Caco-2 (cell line): ENCODE measurements at regions of chr2 and their contacts with region 1.

Region 1: DNA sequence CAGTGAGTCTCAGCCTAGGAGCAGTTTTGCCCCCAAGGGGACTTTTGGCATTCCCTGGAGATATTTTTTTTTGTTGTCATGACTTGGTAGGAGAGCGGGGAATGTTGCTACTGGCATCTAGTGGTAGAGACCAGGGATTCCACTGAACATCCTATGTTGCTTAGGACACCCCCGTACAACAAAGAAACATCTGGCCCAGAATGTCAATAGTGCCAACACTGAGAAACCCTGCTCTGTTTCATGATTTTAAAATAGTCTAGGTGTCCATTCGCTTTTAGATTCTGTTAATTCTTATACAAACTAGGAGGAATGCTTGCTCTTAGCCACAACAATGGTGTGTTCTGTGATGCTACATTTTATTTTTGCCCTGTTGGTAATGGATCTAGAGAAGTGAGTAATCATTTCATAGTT is 225.8 kb upstream of the SIX3 start:
- DNase-seq: peak; percentile 44 to 55
- H3K4me3 ChIP-seq: no peak overlapping the region
- H3K4me3 Mint-ChIP-seq: no peak overlapping the region
- H3K27ac Mint-ChIP-seq: no peak overlapping the region
- H3K4me1 ChIP-seq: no peaks in the 10 kb centered on the region
- H3K4me1 Mint-ChIP-seq: no peaks in the 10 kb centered on the region
- H3K27me3 ChIP-seq: no peaks in the 10 kb centered on the region
- H3K27me3 Mint-ChIP-seq: no peaks in the 10 kb centered on the region
- CTCF ChIP-seq: peak; percentile 51 to 58

Region 2: GRCh38 chr2:44392338-44392943 is 323.2 kb before region 1 on chr2:
- CTCF ChIA-PET with region 1: no interaction called
- POLR2A ChIA-PET with region 1: no interaction called
- intact Hi-C with region 1: loop called (anchors 5 kb)
- DNase-seq: peak; percentile 55 to 62
- H3K4me3 ChIP-seq: no peak overlapping the region
- H3K4me3 Mint-ChIP-seq: no peak overlapping the region
- H3K27ac Mint-ChIP-seq: no peak overlapping the region
- H3K4me1 ChIP-seq: no peaks in the 10 kb centered on the region
- H3K4me1 Mint-ChIP-seq: peaks cover 7% of the 10 kb centered on the region
- H3K27me3 ChIP-seq: no peaks in the 10 kb centered on the region
- H3K27me3 Mint-ChIP-seq: no peaks in the 10 kb centered on the region
- CTCF ChIP-seq: peak; percentile 59 to 79

Region 3: GRCh38 chr2:44560352-44560751 is 155.3 kb before region 1 on chr2:
- CTCF ChIA-PET with region 1: no interaction called
- POLR2A ChIA-PET with region 1: no interaction called
- intact Hi-C with region 1: loop called (anchors 10 kb)
- DNase-seq: peak; percentile 42 to 47
- H3K4me3 ChIP-seq: no peak overlapping the region
- H3K4me3 Mint-ChIP-seq: no peak overlapping the region
- H3K27ac Mint-ChIP-seq: peak overlapping the region; percentile 1
- H3K4me1 ChIP-seq: peaks cover 12% of the 10 kb centered on the region
- H3K4me1 Mint-ChIP-seq: peaks cover 16% of the 10 kb centered on the region
- H3K27me3 ChIP-seq: no peaks in the 10 kb centered on the region
- H3K27me3 Mint-ChIP-seq: no peaks in the 10 kb centered on the region
- CTCF ChIP-seq: peak; percentile 22 to 25

Region 4: GRCh38 chr2:44616667-44617155 is 99.0 kb before region 1 on chr2:
- CTCF ChIA-PET with region 1: no interaction called
- POLR2A ChIA-PET with region 1: no interaction called
- intact Hi-C with region 1: loop called (anchors 2 kb)
- DNase-seq: no peak
- H3K4me3 ChIP-seq: no peak overlapping the region
- H3K4me3 Mint-ChIP-seq: no peak overlapping the region
- H3K27ac Mint-ChIP-seq: no peak overlapping the region
- H3K4me1 ChIP-seq: no peaks in the 10 kb centered on the region
- H3K4me1 Mint-ChIP-seq: peaks cover 14% of the 10 kb centered on the region
- H3K27me3 ChIP-seq: no peaks in the 10 kb centered on the region
- H3K27me3 Mint-ChIP-seq: no peaks in the 10 kb centered on the region
- CTCF ChIP-seq: no peak